CD4-positive, alpha-beta memory T cell (primary cell): ENCODE measurements at regions of chr5 and their contacts with region 1.

Region 1: DNA sequence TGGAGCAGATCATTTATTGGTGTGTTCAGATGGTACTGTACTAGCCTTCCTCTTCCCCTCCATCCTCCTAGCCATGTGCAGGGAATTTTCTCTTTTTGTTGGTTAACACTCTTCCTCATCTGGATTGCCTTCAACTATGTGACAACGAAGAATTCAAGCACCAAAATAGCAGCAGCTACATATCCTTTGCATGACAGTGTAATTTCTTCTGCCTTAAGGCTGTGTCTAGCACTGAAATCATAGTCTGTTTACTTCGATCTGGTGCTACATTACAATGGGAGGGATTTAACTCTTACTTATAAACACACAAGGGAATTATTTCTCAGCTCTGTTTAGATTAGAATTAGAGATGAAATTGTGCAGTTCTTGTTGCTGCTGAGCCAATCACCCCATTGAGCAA is 260.4 kb downstream of the ARL15 start:
- DNase-seq: no peak
- H3K4me3 ChIP-seq: no peak overlapping the region
- H3K4me3 Mint-ChIP-seq: no peak overlapping the region
- H3K27ac ChIP-seq: no peak overlapping the region
- H3K27ac Mint-ChIP-seq: no peak overlapping the region
- H3K4me1 ChIP-seq: no peaks in the 10 kb centered on the region
- H3K4me1 Mint-ChIP-seq: peaks cover 0 to 2% (median 0%) of the 10 kb centered on the region in 4 donors
- H3K27me3 ChIP-seq: no peaks in the 10 kb centered on the region
- H3K27me3 Mint-ChIP-seq: no peaks in the 10 kb centered on the region

Region 2: DNA sequence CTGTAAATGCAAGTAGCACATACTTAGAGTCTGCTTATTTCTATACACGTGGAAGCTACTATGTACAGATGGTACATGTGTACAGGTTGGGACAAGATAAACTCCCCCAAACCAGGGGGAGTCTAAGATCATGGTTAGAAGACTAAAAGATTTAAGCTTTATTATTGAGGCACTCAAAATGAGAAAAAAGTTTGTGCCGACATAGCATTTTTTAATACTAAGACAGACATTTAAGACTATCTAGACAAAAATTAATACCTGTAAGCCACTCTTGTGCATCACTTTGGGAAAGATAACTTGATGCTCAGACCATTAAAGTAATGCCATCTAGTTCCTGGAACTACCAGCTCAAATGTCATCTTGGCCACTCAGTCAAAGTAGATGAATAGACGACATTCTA is 19.0 kb before region 1 on chr5:
- CTCF ChIA-PET with region 1: no interaction called
- POLR2A ChIA-PET with region 1: no interaction called
- intact Hi-C with region 1: loop called (anchors 1 kb)
- DNase-seq: no peak
- H3K4me3 ChIP-seq: no peak overlapping the region
- H3K4me3 Mint-ChIP-seq: no peak overlapping the region
- H3K27ac ChIP-seq: no peak overlapping the region
- H3K27ac Mint-ChIP-seq: no peak overlapping the region
- H3K4me1 ChIP-seq: no peaks in the 10 kb centered on the region
- H3K4me1 Mint-ChIP-seq: peaks cover 0 to 3% (median 0%) of the 10 kb centered on the region in 4 donors
- H3K27me3 ChIP-seq: no peaks in the 10 kb centered on the region
- H3K27me3 Mint-ChIP-seq: no peaks in the 10 kb centered on the region

Region 3: DNA sequence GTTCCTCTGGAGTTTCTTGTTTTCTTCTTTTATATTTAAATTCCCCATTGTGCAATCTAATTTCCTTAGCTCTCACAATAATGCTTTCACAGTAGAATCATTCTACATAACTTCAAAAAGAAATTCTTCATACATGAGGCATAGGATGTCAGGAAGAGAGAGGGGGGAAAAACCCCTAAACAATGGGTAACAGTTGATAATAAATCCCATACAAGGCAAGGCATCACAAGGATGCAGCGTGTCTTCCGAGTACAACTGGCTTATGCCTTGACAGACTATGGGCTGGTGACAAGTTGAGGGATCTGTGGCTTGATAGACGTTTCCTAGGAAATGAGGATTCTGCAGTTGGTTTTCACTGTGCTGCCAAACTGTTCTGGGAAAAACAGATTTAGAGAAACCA is 13.0 kb after region 1 on chr5:
- CTCF ChIA-PET with region 1: no interaction called
- POLR2A ChIA-PET with region 1: no interaction called
- intact Hi-C with region 1: no loop called
- DNase-seq: no peak
- H3K4me3 ChIP-seq: no peak overlapping the region
- H3K4me3 Mint-ChIP-seq: no peak overlapping the region
- H3K27ac ChIP-seq: no peak overlapping the region
- H3K27ac Mint-ChIP-seq: no peak overlapping the region
- H3K4me1 ChIP-seq: no peaks in the 10 kb centered on the region
- H3K4me1 Mint-ChIP-seq: peaks cover 0 to 4% (median 2%) of the 10 kb centered on the region in 4 donors
- H3K27me3 ChIP-seq: no peaks in the 10 kb centered on the region
- H3K27me3 Mint-ChIP-seq: no peaks in the 10 kb centered on the region

Region 4: GRCh38 chr5:54090495-54091084 is 40.6 kb after region 1 on chr5:
- CTCF ChIA-PET with region 1: no interaction called
- POLR2A ChIA-PET with region 1: no interaction called
- intact Hi-C with region 1: no loop called
- DNase-seq: no peak
- H3K4me3 ChIP-seq: no peak overlapping the region
- H3K4me3 Mint-ChIP-seq: no peak overlapping the region
- H3K27ac ChIP-seq: no peak overlapping the region
- H3K27ac Mint-ChIP-seq: no peak overlapping the region
- H3K4me1 ChIP-seq: no peaks in the 10 kb centered on the region
- H3K4me1 Mint-ChIP-seq: peaks cover 0 to 4% (median 2%) of the 10 kb centered on the region in 4 donors
- H3K27me3 ChIP-seq: no peaks in the 10 kb centered on the region
- H3K27me3 Mint-ChIP-seq: no peaks in the 10 kb centered on the region

Region 5: DNA sequence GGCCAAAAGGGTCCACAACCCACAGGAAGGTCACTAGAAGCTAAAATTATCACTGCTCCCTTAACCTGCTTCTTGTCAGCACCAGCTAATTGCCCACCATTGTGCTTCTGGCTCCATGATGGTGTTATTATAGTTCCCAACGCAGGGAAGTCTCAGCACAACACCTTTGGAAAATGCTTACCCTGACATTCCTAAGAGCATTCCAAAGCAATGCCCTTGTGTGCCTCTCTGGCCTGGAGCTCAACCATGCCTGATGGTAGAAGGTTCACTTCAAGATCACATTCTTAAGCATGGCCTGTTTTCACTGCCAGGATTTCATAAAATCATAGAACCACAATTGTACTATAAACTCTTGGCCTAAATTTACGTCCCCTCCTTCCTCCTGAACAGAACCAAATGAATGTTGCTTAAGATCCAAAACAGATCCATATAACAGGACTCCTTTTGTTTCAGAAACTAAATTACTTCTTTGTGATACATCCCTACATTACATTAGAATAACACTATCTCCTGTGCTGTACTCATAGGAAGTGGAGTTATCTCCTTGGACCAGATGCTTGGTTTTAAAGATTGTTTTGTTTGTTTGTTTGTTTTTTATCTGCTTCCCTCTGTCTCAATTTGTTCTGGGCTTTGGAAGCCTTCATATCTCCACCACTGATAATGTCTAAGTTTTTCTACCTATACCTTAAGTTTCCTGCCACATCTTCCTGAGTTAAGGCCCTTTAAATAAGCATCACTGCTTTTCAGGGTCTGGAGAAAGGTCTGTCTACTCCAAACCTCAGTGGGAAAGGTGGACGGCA is 228.3 kb after region 1 on chr5:
- CTCF ChIA-PET with region 1: no interaction called
- POLR2A ChIA-PET with region 1: no interaction called
- intact Hi-C with region 1: no loop called
- DNase-seq: no peak
- H3K4me3 ChIP-seq: no peak overlapping the region
- H3K4me3 Mint-ChIP-seq: no peak overlapping the region
- H3K27ac ChIP-seq: no peak overlapping the region
- H3K27ac Mint-ChIP-seq: no peak overlapping the region
- H3K4me1 ChIP-seq: no peaks in the 10 kb centered on the region
- H3K4me1 Mint-ChIP-seq: peaks cover 7 to 17% (median 13%) of the 10 kb centered on the region in 4 donors
- H3K27me3 ChIP-seq: no peaks in the 10 kb centered on the region
- H3K27me3 Mint-ChIP-seq: no peaks in the 10 kb centered on the region